ENCODE measurements at regions of chr3 and their contacts with region 1.

Region 1: GRCh38 chr3:191628571-191628970 is 167.6 kb downstream of the PYDC2 start:
- DNase-seq: no peak
- H3K4me3 Mint-ChIP-seq: no peak overlapping the region
- H3K27ac Mint-ChIP-seq: no peak overlapping the region
- H3K4me1 Mint-ChIP-seq: no peaks in the 10 kb centered on the region
- H3K27me3 Mint-ChIP-seq: no peaks in the 10 kb centered on the region
- CTCF ChIP-seq: no peak

Region 2: DNA sequence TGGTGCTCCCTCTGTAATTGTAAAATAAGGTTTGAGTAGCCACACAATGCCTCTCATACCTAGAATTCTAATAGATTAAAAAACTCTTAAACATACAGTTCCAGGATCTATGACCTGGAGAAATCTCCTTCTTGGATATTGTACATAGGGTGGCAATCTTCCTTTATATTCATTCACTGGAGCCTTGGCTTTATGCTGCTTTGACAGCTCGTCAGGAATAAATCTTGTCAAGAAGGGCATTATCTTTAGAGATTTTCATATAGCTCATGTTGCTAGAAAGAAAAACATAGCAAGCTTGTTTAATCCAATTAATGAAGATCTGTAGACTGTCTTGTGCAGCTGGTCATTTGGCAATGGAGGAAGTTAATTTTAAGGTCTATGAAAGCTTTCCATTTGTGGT is 36.5 kb before region 1 on chr3:
- CTCF ChIA-PET with region 1: no interaction called
- intact Hi-C with region 1: no loop called
- DNase-seq: no peak
- H3K4me3 Mint-ChIP-seq: no peak overlapping the region
- H3K27ac Mint-ChIP-seq: no peak overlapping the region
- H3K4me1 Mint-ChIP-seq: no peaks in the 10 kb centered on the region
- H3K27me3 Mint-ChIP-seq: no peaks in the 10 kb centered on the region
- CTCF ChIP-seq: no peak

Region 3: DNA sequence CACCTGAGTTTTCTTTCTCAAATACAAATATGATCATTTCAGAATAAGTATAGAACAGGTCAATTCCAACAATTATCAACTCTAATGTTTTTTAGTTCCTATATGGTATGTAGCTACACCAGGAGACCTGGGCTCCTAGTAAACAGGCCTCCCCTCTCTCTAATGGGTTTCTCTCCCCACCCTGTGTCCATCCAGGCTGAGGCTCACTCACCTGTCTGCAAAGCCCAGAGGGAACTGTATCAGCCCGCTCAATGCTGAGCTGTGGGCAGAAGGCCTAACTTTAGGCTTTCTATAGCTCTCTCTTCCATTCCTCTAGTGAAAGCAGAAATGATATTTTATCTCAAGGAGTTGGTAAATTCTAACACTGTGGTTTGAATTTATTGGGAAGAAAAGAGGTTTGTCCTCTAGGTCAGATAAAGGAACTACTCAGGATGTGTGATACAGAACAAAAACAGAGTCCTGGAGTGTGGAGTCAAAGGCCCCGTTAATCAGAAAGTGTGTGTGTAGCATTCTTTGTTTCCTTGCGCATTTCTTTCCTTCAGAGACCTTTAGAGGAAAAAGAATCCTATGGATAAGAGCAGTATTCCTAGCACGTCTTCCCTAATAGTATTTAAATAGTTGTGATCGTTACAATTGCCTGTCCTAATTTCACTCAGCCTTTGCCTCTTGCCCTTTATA is 241.3 kb after region 1 on chr3:
- CTCF ChIA-PET with region 1: interaction called, 13 read pairs
- intact Hi-C with region 1: no loop called
- DNase-seq: no peak
- H3K4me3 Mint-ChIP-seq: no peak overlapping the region
- H3K27ac Mint-ChIP-seq: no peak overlapping the region
- H3K4me1 Mint-ChIP-seq: no peaks in the 10 kb centered on the region
- H3K27me3 Mint-ChIP-seq: no peaks in the 10 kb centered on the region
- CTCF ChIP-seq: no peak

Region 4: DNA sequence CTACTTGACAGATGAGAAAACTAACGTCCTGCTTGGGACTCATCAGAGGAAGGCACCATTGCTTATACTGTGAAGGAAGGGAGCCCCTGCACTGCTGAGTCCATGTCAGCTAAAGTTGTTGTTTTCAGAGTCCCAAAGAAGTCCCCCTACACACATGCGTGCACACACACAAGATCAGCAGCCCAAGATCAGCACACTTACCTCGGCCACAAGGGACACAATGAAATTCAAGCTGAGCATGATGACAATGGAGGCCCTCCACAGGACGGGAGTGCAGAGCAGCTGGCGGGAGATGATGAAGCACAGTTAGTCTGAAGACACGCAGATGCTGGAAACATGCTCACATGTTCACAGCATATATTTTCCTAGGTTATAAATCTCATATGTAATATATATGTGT is 1778.5 kb after region 1 on chr3:
- CTCF ChIA-PET with region 1: no interaction called
- intact Hi-C with region 1: no loop called
- DNase-seq: no peak
- H3K4me3 Mint-ChIP-seq: no peak overlapping the region
- H3K27ac Mint-ChIP-seq: no peak overlapping the region
- H3K4me1 Mint-ChIP-seq: no peaks in the 10 kb centered on the region
- H3K27me3 Mint-ChIP-seq: no peaks in the 10 kb centered on the region
- CTCF ChIP-seq: no peak

Measured in Calu3 (cell line).